GM13976 (cell line): ENCODE measurements at regions of chr5 and their contacts with region 1.

Region 1: DNA sequence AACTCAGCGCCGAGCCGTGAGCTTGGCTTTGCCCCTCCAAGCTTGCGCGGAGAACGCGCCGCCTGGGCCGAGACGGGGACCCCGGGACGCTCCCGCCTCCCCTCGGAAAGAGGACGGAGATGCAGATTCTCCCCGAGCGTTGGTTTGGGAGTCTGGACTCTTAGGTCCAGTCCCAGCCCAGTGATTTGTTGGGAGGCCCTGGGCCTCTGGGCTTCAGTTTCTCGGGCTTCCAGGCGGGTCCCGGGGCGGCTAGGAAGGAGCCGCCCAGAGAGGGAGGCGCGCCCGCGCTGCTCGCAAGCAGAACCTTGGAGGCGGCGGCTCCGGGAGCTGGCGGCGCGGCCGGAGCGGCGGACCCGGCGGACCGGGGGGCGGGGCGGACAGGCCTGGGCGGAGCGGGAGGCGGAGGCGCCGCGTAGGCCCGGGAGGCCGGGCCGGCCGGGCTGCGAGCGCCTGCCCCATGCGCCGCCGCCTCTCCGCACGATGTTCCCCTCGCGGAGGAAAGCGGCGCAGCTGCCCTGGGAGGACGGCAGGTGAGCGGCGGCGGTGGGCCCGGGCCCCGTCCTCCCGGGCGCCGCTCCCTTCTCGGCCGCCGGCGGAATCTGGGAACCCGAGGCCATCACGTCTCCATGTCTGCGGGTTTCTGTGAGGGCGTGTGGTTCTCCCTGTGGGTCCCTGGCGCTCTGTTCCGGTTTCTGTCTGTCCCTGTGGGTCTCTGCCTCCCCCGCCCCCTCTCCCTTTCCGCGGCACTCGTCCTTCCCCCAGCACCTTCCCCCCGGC is at the start of gene B4GALT7:
- DNase-seq: peak; percentile 94
- CTCF ChIP-seq: no peak

Region 2: GRCh38 chr5:178069909-178070308 is 470.0 kb after region 1 on chr5:
- in situ Hi-C with region 1: loop called (anchors 25 kb)
- DNase-seq: peak; percentile 49
- CTCF ChIP-seq: peak; percentile 13

Region 3: GRCh38 chr5:178602752-178603151 is 1002.8 kb after region 1 on chr5:
- in situ Hi-C with region 1: no loop called
- DNase-seq: no peak
- CTCF ChIP-seq: no peak